ENCODE measurements at regions of chr4 and their contacts with region 1.

Region 1: GRCh38 chr4:146398404-146398803 is 123.3 kb downstream of the SLC10A7 start:
- DNase-seq: peak; percentile 74
- H3K4me3 ChIP-seq: peak overlapping the region; percentile 13
- H3K27ac ChIP-seq: peak overlapping the region; percentile 85
- H3K4me1 ChIP-seq: peaks cover 60% of the 10 kb centered on the region
- H3K27me3 ChIP-seq: no peaks in the 10 kb centered on the region
- CTCF ChIP-seq: no peak

Region 2: GRCh38 chr4:146368209-146368608 is 30.2 kb before region 1 on chr4:
- CTCF ChIA-PET with region 1: interaction called, 10 read pairs
- POLR2A ChIA-PET with region 1: no interaction called
- intact Hi-C with region 1: no loop called
- DNase-seq: peak; percentile 88
- H3K4me3 ChIP-seq: peak overlapping the region; percentile 12
- H3K27ac ChIP-seq: peak overlapping the region; percentile 66
- H3K4me1 ChIP-seq: peaks cover 60% of the 10 kb centered on the region
- H3K27me3 ChIP-seq: no peaks in the 10 kb centered on the region
- CTCF ChIP-seq: no peak

Region 3: GRCh38 chr4:146545102-146545501 is 146.7 kb after region 1 on chr4:
- CTCF ChIA-PET with region 1: no interaction called
- POLR2A ChIA-PET with region 1: no interaction called
- intact Hi-C with region 1: no loop called
- DNase-seq: peak; percentile 57
- H3K4me3 ChIP-seq: no peak overlapping the region
- H3K27ac ChIP-seq: no peak overlapping the region
- H3K4me1 ChIP-seq: no peaks in the 10 kb centered on the region
- H3K27me3 ChIP-seq: no peaks in the 10 kb centered on the region
- CTCF ChIP-seq: peak; percentile 60

Measured in A673 (cell line).